GM13977 (cell line): ENCODE measurements at regions of chr1 and their contacts with region 1.

Region 1: GRCh38 chr1:51901151-51901550 is 22.6 kb upstream of the NRDC start:
- DNase-seq: no peak
- CTCF ChIP-seq: no peak

Region 2: GRCh38 chr1:52002038-52002917 is 101.1 kb after region 1 on chr1:
- in situ Hi-C with region 1: loop called (anchors 5 kb)
- DNase-seq: peak; percentile 86
- CTCF ChIP-seq: peak; percentile 92